Activated CD4-positive, alpha-beta T cell treated with anti-CD3 and anti-CD28 coated beads, Interleukin-2, amount 10 ng/mL, durations not matched to agents 24 days and 14 days (primary cell): ENCODE measurements at regions of chr2 and their contacts with region 1.

Region 1: DNA sequence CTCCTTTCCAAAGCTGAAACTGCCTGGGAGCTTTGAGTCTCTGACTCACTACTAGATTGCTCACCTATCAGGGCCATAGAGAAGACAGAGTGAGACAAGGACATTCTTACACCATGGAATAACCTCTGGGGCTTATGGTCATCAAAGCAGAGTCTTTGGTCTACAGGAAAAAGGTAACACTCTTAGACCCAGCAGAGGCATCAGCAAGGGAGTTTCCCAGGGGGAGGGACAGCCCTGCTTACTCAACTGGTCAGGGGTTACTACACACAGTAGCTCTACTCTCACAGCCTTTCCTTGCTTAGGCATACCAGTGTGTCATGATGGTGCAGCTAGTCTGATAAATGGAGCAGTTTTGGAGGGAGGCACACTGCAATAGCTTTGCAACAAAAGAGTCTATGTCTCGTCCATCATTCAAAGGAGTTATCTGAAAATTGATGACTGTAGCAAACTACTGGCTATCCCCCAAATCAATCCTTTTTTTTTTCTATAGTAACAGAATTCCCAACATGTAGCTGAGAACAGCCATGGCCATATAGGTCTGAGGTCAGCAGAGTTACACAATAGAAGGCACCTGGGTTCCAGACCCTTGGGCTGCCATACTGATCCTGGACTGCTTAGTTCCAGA is 22.4 kb upstream of the CD28 start:
- DNase-seq: peak; percentile 72
- H3K4me3 Mint-ChIP-seq: no peak overlapping the region
- H3K27ac Mint-ChIP-seq: no peak overlapping the region
- H3K4me1 Mint-ChIP-seq: peaks cover 38% of the 10 kb centered on the region
- H3K27me3 Mint-ChIP-seq: no peaks in the 10 kb centered on the region

Region 2: GRCh38 chr2:203470371-203470770 is 213.7 kb before region 1 on chr2:
- intact Hi-C with region 1: no loop called
- DNase-seq: no peak
- H3K4me3 Mint-ChIP-seq: no peak overlapping the region
- H3K27ac Mint-ChIP-seq: no peak overlapping the region
- H3K4me1 Mint-ChIP-seq: no peaks in the 10 kb centered on the region
- H3K27me3 Mint-ChIP-seq: peaks cover 2% of the 10 kb centered on the region

Region 3: DNA sequence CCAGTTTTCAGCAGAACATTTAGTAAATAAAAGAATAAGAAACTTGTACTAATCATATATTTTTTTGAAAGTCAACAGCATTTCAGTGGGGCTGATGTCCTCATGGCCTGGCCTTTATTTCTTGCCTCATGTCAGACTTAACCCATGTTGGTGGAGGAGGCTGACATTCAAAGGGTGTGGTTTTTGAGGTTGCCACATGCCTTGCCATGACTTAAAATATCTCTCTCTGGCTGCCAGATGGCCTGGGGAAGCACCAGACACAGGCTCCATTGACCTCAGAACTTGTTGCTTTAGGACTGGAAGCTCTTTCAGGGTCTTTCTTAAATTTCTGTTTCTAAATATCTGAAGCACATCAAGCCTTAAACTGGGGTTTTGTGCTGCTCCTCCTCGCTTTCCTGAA is 10.1 kb before region 1 on chr2:
- intact Hi-C with region 1: loop called (anchors 1 kb)
- DNase-seq: peak; percentile 83
- H3K4me3 Mint-ChIP-seq: peak overlapping the region; percentile 63
- H3K27ac Mint-ChIP-seq: peak overlapping the region; percentile 89
- H3K4me1 Mint-ChIP-seq: peaks cover 27% of the 10 kb centered on the region
- H3K27me3 Mint-ChIP-seq: no peaks in the 10 kb centered on the region